HepG2 (cell line): ENCODE measurements at regions of chr1 and their contacts with region 1.

Region 1: DNA sequence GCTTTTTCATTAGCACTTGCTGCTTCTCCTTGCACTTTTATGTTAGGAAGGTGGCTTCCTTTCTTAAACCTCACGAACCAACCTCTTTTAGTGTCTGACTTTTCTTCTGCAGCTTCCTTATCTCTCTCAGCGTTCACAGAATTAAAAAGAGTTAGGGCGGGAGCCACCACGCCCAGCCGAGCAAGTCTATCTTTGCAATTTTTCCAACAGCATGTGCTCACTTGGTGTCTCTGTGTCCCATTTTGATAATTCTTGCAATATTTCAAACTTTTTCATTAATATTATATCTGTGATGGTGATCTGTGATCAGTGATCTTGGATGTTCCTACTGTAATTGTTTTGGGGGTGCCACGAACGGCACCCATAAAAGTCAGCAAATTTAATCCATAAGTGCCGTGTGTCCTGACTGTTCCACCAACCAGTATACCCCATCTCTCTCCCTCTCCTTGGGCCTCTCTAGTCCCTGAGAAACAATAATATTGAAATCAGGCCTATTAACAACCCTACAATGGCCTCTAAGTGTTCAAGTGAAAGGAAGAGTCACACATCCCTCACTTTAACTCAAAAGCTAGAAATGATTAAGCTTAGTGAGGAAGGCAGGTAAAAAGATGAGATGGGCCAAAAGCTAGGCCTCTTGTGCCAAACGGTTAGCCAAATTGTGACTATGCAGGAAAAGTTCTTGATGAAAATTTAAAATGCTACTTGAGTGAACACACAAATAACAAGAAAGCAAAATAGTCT is 15.9 kb upstream of the ITPKB start:
- DNase-seq: no peak
- ATAC-seq: no peak
- H3K4me3 ChIP-seq: no peak overlapping the region
- H3K27ac ChIP-seq: no peak overlapping the region
- H3K4me1 ChIP-seq: no peaks in the 10 kb centered on the region
- H3K27me3 ChIP-seq: peaks cover 0 to 41% of the 10 kb centered on the region in 2 experiments; a peak in 3 of 5 replicates
- CTCF ChIP-seq: no peak
- EP300 ChIP-seq: no peak
- POLR2A ChIP-seq: no peak
- RAD21 ChIP-seq: no peak

Region 2: DNA sequence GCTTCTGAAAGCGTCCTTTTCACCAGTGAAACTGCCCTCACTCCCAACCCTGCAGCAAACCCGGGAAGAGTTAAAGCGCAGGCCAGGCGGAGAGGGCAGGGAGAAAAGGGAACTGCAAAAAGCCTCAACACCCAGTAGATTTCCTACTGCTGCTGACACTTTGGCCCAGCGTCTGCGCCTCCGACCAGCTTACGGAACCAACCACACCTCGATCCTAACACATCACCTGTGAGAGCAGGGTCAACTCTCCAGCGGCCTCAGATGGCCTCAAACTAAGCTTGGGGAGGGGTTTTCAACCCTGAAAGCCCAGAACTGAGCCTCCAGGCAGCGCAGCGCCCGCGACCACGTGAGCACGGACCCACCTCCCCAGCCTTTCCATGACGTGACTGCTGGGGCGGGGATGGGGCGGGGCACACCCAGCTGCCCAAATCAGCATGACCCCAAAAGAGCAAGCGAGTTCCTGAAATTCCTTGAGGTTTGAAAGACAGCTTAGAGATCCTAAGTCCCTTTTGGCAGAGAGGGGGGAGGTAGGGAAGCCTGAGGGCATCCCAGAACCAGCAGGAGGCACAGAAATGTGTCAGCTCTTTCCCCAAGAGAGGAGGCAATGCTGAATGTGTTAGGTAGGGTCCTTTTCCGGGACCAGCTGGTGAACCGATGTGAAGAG is 75.0 kb before region 1 on chr1:
- CTCF ChIA-PET with region 1: no interaction called
- POLR2A ChIA-PET with region 1: no interaction called
- in situ Hi-C with region 1: no loop called
- intact Hi-C with region 1: no loop called
- DNase-seq: no peak
- ATAC-seq: no peak
- H3K4me3 ChIP-seq: peak overlapping the region in 1 of 3 experiments; percentile 27; a peak in 1 of 6 replicates
- H3K27ac ChIP-seq: no peak overlapping the region
- H3K4me1 ChIP-seq: peaks cover 5% of the 10 kb centered on the region; the same call in 1 of the 2 replicates
- H3K27me3 ChIP-seq: peaks cover 6 to 70% of the 10 kb centered on the region in 2 experiments
- CTCF ChIP-seq: no peak
- EP300 ChIP-seq: no peak
- POLR2A ChIP-seq: no peak
- RAD21 ChIP-seq: no peak

Region 3: GRCh38 chr1:227805606-227806197 is 1050.7 kb after region 1 on chr1:
- CTCF ChIA-PET with region 1: no interaction called
- POLR2A ChIA-PET with region 1: no interaction called
- in situ Hi-C with region 1: no loop called
- intact Hi-C with region 1: loop called (anchors 10 kb)
- DNase-seq: no peak
- ATAC-seq: no peak
- H3K4me3 ChIP-seq: no peak overlapping the region
- H3K27ac ChIP-seq: no peak overlapping the region
- H3K4me1 ChIP-seq: no peaks in the 10 kb centered on the region
- H3K27me3 ChIP-seq: no peaks in the 10 kb centered on the region; a peak in 1 of 5 replicates
- CTCF ChIP-seq: no peak
- EP300 ChIP-seq: no peak
- POLR2A ChIP-seq: no peak
- RAD21 ChIP-seq: no peak